ENCODE measurements at regions of chr14 and their contacts with region 1.

Region 1: DNA sequence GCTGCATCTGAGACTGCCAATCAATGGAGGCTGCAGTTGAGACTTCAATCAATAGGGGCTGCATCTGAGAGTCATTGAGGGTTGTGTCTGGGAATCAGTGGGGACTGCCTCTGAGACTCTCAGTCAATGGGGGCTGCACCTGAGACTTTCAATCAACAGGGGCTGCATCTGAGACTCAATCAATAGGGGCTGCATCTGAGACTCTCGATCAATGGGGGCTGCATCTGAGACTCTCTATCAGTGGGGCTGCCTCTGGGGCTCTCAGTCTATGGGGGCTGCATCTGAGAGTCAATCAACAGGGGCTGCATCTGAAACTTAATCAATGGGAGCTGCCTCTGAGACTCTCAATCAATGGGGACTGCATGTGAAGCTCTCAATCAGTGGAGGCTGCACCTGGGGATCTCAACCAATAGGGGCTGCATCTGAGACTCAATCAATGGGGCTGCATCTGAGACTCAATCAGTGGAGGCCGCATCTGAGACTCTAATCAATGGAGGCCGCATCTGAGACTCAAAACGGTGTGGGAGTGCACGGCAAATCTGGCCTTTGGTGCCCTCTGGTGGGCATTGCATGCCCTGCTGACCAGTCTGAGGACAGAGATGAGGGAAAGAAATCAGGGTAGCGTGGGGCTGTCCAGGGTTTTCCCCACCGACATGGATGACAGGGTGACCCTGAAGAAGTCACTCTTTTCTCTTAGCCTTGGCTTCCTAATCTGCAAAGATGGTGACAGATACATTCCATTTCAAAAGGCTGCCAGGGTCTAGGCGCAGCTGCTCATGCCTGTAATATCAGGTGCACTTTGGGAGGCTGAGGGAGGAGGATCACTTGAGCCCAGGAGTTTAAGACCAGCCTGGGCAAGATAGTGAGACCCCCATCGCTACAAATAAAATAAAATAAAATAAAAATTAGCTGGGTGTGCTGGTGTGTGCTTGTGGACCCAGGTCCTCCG is 41.3 kb upstream of the EIF5 start:
- DNase-seq: peak in 1 of 2 donors; percentile 85
- H3K4me3 ChIP-seq: no peak overlapping the region
- H3K27ac ChIP-seq: no peak overlapping the region
- H3K4me1 ChIP-seq: no peaks in the 10 kb centered on the region
- H3K27me3 ChIP-seq: no peaks in the 10 kb centered on the region
- CTCF ChIP-seq: peak; percentile 86 to 91 (median 88)

Region 2: DNA sequence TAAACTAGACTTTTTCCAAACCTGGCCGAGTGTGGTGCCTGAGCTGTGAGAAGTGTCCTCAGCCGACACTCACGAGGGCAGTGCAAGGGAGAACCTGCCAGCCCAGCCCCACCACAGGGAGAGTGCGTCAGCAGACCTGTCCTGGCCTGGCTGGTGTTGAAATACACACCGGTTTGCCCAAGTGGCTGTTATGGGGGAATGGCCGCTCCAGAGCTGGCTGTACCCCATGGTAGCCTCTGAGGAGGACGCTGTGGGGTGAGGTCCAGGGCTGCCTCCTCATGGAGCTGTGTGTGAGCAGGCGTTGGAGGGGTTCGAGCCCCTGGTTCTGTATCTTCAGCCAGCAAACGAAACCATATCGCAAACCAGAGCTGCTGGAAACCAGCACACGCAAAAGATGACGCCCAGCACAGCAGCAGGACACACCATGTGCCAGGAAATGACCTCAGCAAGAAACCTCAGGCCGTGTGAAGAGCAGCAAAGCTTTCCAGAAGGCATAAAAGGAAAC is 792.5 kb before region 1 on chr14:
- intact Hi-C with region 1: no loop called
- DNase-seq: peak; percentile 64 to 85
- H3K4me3 ChIP-seq: peak overlapping the region in 1 of 2 donors; percentile 35
- H3K27ac ChIP-seq: peak overlapping the region; percentile 84 to 87
- H3K4me1 ChIP-seq: peaks cover 3 to 15% of the 10 kb centered on the region in 2 donors
- H3K27me3 ChIP-seq: no peaks in the 10 kb centered on the region
- CTCF ChIP-seq: no peak

Region 3: GRCh38 chr14:103074699-103075355 is 217.9 kb before region 1 on chr14:
- intact Hi-C with region 1: loop called (anchors 1 kb)
- DNase-seq: peak in 1 of 2 donors; percentile 80
- H3K4me3 ChIP-seq: peak overlapping the region; percentile 47 to 68
- H3K27ac ChIP-seq: peak overlapping the region; percentile 38 to 54
- H3K4me1 ChIP-seq: peaks cover 3 to 5% of the 10 kb centered on the region in 2 donors
- H3K27me3 ChIP-seq: no peaks in the 10 kb centered on the region
- CTCF ChIP-seq: no peak